HAP-1 (cell line): ENCODE measurements at regions of chr7 and their contacts with region 1.

Region 1: DNA sequence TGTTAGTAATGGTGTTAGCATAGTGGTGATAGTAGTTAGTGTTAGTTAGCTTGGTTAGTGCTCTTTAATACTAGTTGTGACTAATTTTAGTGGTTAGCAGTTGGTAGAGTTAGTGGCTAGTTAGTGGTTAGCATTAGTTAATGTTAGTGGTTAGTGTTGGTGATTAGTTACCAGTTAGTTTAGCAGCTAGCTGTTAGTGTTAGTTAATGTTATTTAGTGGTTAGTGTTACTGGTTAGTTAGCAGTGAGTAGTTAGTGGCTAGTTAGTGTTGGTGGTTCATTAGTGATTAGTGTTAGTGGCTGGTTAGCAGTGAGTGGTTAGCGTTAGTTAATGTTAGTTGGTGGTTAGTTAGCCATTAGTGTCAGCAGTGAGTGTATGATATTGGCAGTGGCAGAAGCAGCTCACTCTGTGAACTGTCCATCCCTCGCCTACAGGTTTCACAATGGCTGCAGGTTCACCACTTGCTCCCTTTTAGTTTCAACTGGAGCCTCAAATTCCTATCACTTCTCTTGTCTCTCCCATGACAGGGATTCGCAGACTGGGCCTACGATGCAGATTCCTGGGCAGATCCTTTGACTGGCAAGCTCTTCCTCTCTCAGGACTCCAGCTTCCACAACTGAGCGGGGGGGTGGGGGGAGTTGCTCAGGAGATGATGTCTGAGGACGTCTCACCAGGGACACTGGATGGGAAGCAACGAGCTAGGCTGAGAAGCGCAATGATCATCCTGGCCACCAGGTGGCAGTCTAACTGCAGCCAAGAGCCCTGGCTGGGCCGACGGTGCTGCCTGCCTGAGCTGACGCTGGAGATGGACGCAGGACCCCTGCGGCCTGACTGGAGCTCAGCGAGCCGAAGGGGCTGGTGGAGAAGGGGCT is 19.5 kb downstream of the GHRHR start:
- DNase-seq: peak; percentile 67 to 92
- H3K4me3 ChIP-seq: no peak overlapping the region
- H3K4me1 ChIP-seq: peaks cover 7% of the 10 kb centered on the region
- H3K27me3 ChIP-seq: peaks cover 13% of the 10 kb centered on the region

Region 2: DNA sequence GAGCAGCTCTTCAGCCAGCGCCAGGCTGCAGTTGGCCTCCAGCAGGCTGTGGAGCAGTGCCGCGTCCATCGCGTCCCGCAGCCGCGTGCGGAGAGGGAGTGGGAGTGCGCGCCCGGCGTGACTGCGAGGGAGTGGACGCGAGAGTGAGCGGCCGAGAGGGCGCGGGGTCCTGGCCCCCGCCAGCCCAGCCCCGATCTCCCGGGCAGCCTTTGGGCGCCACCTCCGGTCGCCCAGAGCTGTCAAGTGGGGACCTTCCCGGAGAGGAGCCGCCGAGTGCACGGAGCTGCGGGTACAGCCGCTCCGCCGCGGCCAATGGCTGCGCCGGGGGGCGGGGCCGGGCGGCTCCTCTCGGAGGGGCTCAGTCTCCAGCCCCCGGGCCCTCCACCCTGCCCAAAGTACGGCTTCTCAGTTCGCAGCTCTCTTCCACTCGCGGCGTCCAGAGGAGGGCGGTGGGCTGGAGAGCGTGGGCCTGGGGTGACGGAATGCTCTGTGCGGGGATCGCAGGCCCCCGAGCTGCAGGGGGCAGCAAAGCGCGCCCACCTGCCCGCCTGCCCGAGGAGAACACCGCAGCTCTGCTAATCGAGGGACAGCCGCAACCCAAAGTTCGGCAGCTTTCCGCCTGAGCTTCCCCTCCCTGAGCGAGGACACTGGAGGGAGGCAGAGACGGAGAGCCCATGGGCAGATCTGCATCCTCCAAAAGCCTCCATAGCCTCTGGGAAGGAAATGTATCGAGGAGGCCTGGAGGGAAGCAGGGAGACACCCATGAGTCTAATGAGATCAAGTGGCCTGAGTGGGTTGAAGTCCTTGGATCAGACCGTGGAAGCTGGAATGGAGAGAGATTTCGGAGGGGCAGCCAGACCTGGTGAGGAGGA is 300.8 kb before region 1 on chr7 and contains the start of gene CRHR2:
- in situ Hi-C with region 1: no loop called
- DNase-seq: peak in 1 of 2 experiments; percentile 59
- H3K4me3 ChIP-seq: peak within 1 kb of the TSS; percentile 29
- H3K4me1 ChIP-seq: no peaks in the 10 kb centered on the region; the same call in 1 of the 2 replicates
- H3K27me3 ChIP-seq: peaks cover 45% of the 10 kb centered on the region

Region 3: DNA sequence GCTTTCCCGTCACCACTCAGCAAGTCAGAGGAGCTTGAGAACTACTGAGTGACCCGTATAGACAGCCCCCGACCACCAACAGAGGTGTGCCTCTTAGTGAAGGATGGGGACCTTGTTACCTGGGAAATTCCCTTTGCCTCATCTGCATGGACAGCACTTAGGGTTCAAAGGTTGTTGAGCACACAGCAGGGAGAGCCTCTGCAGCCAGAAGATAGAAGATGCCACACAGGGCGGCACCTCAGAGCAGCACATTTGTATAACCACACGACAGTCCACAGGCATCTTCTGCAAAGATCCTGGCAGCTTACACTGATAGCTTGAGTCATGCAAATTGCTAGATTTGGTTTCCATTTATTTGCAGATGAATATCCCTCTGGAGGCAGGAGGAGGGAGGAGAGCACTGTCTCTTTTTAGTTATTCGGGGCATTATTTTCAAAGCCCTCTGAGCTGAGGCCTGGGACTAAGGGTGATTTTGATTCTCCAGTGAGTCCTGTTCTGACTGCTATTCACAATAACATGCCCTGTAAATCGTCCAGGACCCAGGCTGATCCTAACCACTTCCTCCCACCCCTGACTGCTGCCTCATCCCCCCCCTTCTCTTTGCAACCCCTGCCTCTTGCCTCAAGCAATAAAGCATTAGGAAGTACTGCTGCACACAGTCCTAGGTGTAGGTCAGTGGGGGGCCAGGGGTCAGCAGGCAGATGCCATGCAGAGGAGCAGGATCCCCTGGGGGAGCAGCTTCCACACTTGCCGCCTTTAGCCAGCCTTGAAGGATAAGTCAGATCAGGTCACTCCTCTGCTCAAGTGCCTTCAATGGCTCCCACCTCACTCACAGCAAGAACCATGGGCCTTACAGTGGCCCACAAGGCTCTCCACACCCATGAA is 256.0 kb before region 1 on chr7:
- in situ Hi-C with region 1: no loop called
- DNase-seq: peak in 1 of 2 experiments; percentile 5
- H3K4me3 ChIP-seq: no peak overlapping the region
- H3K4me1 ChIP-seq: peaks cover 5% of the 10 kb centered on the region; the same call in 1 of the 2 replicates
- H3K27me3 ChIP-seq: peaks cover 18% of the 10 kb centered on the region

Region 4: GRCh38 chr7:31122649-31123058 is 139.4 kb after region 1 on chr7:
- in situ Hi-C with region 1: loop called (anchors 5 kb)
- DNase-seq: peak; percentile 54 to 74
- H3K4me3 ChIP-seq: no peak overlapping the region
- H3K4me1 ChIP-seq: no peaks in the 10 kb centered on the region
- H3K27me3 ChIP-seq: peaks cover 5% of the 10 kb centered on the region; the same call in 1 of the 2 replicates